ENCODE measurements at regions of chr1 and their contacts with region 1.

Region 1: GRCh38 chr1:109773146-109773899 is 9.6 kb upstream of the EPS8L3 start:
- DNase-seq: peak; percentile 87
- CTCF ChIP-seq: peak; percentile 91

Region 2: GRCh38 chr1:109643385-109644230 is 129.7 kb before region 1 on chr1:
- CTCF ChIA-PET with region 1: interaction called, 370 read pairs
- POLR2A ChIA-PET with region 1: no interaction called
- DNase-seq: peak; percentile 88
- CTCF ChIP-seq: peak; percentile 92

Region 3: GRCh38 chr1:109667452-109668122 is 105.7 kb before region 1 on chr1 and contains the start of gene GSTM2:
- CTCF ChIA-PET with region 1: interaction called, 12 read pairs
- POLR2A ChIA-PET with region 1: no interaction called
- DNase-seq: peak; percentile 87
- CTCF ChIP-seq: no peak

Region 4: DNA sequence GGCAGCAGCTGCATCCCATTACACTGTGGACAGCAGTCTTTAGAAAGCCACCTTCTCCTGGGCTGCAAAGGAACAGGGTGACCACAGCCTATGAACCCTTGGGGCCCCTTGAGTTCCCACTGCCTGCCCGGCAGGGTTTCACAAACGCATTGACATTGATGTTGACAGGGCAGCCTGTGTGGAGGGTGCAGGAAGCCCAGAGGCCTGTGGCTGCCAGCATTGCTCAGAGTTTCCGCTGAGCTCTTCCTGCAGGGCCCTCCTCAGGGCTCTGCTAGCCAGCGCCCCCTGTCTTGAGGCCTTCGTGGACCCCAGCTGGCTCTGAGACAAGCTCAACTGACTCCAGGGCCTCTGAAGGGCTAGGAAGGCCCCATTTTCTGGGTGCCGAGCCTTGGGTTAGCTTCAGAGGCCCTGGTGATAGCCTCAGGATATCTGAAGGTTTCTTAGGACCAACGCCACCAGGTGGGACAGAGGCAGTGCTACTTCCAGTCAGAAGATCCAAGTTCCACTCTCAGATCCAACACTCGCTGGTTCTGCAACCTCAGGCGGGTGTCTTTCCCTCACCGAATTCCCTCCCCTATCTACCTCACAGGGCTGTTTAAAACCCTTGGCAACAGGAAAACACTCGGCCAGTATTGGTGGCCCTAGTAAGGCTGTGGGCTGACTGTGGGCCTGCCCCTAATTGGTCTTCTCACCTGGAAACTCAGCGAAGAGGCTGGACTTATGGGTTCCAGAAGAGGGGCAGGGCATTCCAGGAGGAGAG is 17.6 kb after region 1 on chr1:
- CTCF ChIA-PET with region 1: interaction called, 169 read pairs
- POLR2A ChIA-PET with region 1: no interaction called
- DNase-seq: peak; percentile 85
- CTCF ChIP-seq: peak; percentile 53

Region 5: GRCh38 chr1:109816175-109816811 is 43.0 kb after region 1 on chr1:
- CTCF ChIA-PET with region 1: interaction called, 13 read pairs
- POLR2A ChIA-PET with region 1: no interaction called
- DNase-seq: peak; percentile 82
- CTCF ChIP-seq: no peak

Region 6: DNA sequence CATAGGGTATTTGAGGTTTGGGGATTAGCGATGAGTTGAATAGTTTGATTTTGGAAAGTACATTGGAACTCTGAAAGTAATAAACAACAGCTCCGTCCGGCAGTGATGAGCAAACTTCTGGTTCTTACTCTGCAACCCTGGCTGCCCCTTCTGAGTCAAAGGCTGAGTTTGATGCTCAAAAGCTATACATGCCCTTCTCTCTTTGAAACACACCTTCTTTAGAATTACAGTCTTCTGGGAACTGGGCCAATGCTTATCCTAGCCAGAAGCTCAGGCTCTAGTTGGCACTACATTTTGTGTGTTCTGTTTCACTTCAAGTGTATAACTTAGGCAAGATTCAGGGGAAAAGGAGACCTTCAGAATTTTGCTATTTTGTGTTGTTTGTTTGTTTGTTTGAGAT is 220.6 kb after region 1 on chr1:
- CTCF ChIA-PET with region 1: interaction called, 737 read pairs
- POLR2A ChIA-PET with region 1: no interaction called
- DNase-seq: no peak
- CTCF ChIP-seq: no peak

Region 7: DNA sequence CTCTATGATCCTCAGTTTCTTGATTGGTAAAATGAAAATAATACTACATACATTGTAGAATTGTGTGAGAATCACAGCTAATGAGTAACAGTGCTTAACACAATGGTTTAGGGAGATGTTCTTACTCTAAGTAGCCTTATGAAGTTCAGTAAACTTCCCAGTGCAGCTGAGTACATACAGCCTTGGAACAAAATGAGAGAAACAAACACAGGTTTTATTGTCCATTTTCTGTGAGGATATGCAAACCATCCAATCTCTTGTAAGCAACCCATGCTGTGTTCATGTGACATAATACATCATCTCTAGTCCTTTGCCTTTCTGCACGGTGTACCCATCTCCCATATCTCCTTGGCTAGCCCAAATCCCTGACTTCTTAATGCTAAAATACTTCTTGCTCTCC is 246.4 kb after region 1 on chr1:
- CTCF ChIA-PET with region 1: interaction called, 14 read pairs
- POLR2A ChIA-PET with region 1: no interaction called
- DNase-seq: no peak
- CTCF ChIP-seq: no peak